GM13977 (cell line): ENCODE measurements at regions of chr10 and their contacts with region 1.

Region 1: GRCh38 chr10:69515699-69516259 is 57.4 kb downstream of the NEUROG3 start:
- DNase-seq: peak; percentile 84
- CTCF ChIP-seq: peak; percentile 95

Region 2: GRCh38 chr10:68816796-68817443 is 698.9 kb before region 1 on chr10:
- in situ Hi-C with region 1: no loop called
- DNase-seq: no peak
- CTCF ChIP-seq: no peak

Region 3: GRCh38 chr10:69639291-69640195 is 123.8 kb after region 1 on chr10:
- in situ Hi-C with region 1: loop called (anchors 5 kb)
- DNase-seq: peak; percentile 83
- CTCF ChIP-seq: peak; percentile 84